ENCODE measurements at regions of chr4 and their contacts with region 1.

Region 1: GRCh38 chr4:158193171-158193749 is 17.0 kb upstream of the TMEM144 start:
- DNase-seq: no peak
- ATAC-seq: no peak
- H3K4me3 Mint-ChIP-seq: no peak overlapping the region
- H3K27ac Mint-ChIP-seq: no peak overlapping the region
- H3K4me1 Mint-ChIP-seq: no peaks in the 10 kb centered on the region
- H3K27me3 Mint-ChIP-seq: peaks cover 4% of the 10 kb centered on the region
- CTCF ChIP-seq: peak; percentile 50

Region 2: DNA sequence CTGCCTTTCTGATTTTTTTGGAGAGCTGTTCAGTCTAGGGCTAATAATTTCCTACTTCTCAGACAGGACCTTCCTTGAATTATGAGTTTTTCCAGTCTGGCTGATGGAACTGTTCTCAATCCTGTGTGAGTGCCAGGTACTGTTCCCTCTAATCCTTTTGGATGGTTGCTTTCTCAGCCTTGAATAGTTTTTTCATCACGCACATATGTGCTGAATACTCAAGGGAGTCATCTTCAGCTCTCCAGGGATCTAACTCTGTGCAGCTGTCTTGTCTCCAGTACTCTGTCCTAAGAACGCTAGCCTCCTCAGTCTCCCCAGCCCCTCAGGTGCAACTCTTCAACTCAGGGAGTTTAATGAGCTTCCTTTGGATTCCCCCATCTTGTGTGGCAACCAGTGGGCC is 113.6 kb before region 1 on chr4:
- CTCF ChIA-PET with region 1: no interaction called
- POLR2A ChIA-PET with region 1: no interaction called
- intact Hi-C with region 1: no loop called
- DNase-seq: no peak
- ATAC-seq: no peak
- H3K4me3 Mint-ChIP-seq: no peak overlapping the region
- H3K27ac Mint-ChIP-seq: no peak overlapping the region
- H3K4me1 Mint-ChIP-seq: no peaks in the 10 kb centered on the region
- H3K27me3 Mint-ChIP-seq: no peaks in the 10 kb centered on the region
- CTCF ChIP-seq: no peak

Region 3: GRCh38 chr4:158253350-158253980 is 60.2 kb after region 1 on chr4:
- CTCF ChIA-PET with region 1: interaction called, 22 read pairs
- POLR2A ChIA-PET with region 1: no interaction called
- intact Hi-C with region 1: loop called (anchors 1 kb)
- DNase-seq: peak; percentile 66
- ATAC-seq: peak; percentile 66
- H3K4me3 Mint-ChIP-seq: no peak overlapping the region
- H3K27ac Mint-ChIP-seq: no peak overlapping the region
- H3K4me1 Mint-ChIP-seq: no peaks in the 10 kb centered on the region
- H3K27me3 Mint-ChIP-seq: peaks cover 9% of the 10 kb centered on the region
- CTCF ChIP-seq: peak; percentile 66

Region 4: DNA sequence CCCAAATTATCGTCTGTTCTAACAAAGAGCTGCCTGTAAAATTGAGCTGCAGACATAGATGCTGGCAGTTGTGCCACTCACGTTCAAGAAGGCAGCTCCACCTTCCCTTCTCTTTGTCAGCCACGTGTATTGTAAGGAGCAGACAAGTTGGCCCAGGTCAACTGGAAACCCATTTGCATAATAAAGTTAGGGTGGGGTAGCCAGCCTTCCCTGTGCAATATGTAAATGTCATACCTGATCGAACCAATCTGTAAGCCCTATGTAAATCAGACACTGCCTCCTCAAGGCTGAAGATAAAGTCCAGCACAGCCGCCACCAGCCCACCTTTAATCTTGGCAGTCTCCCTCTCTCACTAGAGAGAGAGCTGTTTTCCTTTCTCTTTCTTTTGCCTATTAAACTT is 134.3 kb after region 1 on chr4:
- CTCF ChIA-PET with region 1: no interaction called
- POLR2A ChIA-PET with region 1: no interaction called
- intact Hi-C with region 1: no loop called
- DNase-seq: no peak
- ATAC-seq: no peak
- H3K4me3 Mint-ChIP-seq: no peak overlapping the region
- H3K27ac Mint-ChIP-seq: no peak overlapping the region
- H3K4me1 Mint-ChIP-seq: no peaks in the 10 kb centered on the region
- H3K27me3 Mint-ChIP-seq: no peaks in the 10 kb centered on the region
- CTCF ChIP-seq: no peak

Measured in activated CD8-positive, alpha-beta T cell treated with anti-CD3 and anti-CD28 coated beads for 36 hours (primary cell).